Activated T-helper 1 cell treated with anti-CD3 and anti-CD28 coated beads, Interleukin-12 subunit alpha, Interleukin-12 subunit beta, Interleukin-2, Interleukin-4 antibody, amounts not matched to agents 30 ng/mL and 10 ng/mL and 1 ng/mL, durations not matched to agents 14 hours and 24 hours and 36 hours (primary cell): ENCODE measurements at regions of chr2 and their contacts with region 1.

Region 1: DNA sequence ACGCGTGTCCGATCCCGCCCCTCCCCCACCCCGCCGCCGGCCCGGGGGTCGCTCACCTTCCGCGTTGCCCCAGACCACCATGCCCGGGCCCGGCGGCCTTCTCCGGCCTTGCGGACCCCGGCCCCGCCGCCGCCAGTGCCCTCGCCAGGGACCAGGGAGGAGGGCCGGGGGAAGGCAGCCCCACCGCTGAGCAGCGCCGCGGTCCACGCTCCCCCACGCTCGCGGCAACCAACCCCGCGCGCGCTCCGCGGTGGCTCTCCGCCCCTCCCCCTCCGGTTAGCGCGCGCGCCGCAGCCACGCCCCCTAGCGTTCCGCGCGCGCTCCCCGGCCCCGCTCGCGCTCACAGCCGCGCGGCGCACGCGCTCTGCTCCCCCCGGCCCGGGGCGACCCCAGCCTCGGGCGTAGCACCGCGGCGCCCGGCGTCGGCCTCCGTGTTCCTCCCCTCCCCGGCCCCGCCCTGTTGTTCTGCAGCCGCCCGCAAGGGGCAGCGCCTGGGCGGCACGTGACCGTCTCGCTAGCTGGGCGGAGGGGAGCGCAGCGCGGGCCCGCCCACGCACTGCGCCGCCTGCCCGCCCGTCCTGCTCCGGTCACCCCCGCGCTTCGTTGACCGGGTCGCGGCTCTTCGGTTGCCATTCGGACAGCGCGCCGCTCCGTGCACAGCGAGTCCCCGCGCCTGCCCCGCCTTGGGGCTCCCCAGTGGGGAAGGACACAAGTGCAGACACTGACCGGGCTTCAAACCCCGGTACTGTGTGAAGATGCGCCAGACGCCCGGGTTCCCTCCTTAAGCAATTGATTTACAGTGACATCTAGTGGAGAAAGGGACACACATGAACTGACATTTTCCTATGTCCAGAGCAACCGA is at the start of gene REV1:
- DNase-seq: peak; percentile 87
- H3K4me3 Mint-ChIP-seq: peak within 1 kb of the TSS; percentile 94
- H3K27ac Mint-ChIP-seq: peak within 1 kb of the TSS; percentile 97
- H3K4me1 Mint-ChIP-seq: peaks cover 35% of the 10 kb centered on the region
- H3K27me3 Mint-ChIP-seq: peaks cover 3% of the 10 kb centered on the region
- total RNA-seq, gene REV1: 49.6 and 53.7 TPM in 2 replicates

Region 2: GRCh38 chr2:98822301-98823164 is 667.5 kb before region 1 on chr2:
- intact Hi-C with region 1: loop called (anchors 10 kb)
- DNase-seq: peak; percentile 63
- H3K4me3 Mint-ChIP-seq: peak overlapping the region; percentile 69
- H3K27ac Mint-ChIP-seq: no peak overlapping the region
- H3K4me1 Mint-ChIP-seq: peaks cover 27% of the 10 kb centered on the region
- H3K27me3 Mint-ChIP-seq: peaks cover 10% of the 10 kb centered on the region

Region 3: GRCh38 chr2:99154643-99155536 is 335.1 kb before region 1 on chr2 and contains the starts of genes LIPT1 and TSGA10:
- intact Hi-C with region 1: loop called (anchors 1 kb)
- DNase-seq: peak; percentile 92
- H3K4me3 Mint-ChIP-seq: no peak within 1 kb of the TSS
- H3K27ac Mint-ChIP-seq: peak within 1 kb of the TSS; percentile 95
- H3K4me1 Mint-ChIP-seq: peaks cover 31% of the 10 kb centered on the region
- H3K27me3 Mint-ChIP-seq: no peaks in the 10 kb centered on the region
- total RNA-seq, gene LIPT1: 2.2 and 3.3 TPM in 2 replicates
- total RNA-seq, gene TSGA10: 3.0 and 4.1 TPM in 2 replicates

Region 4: DNA sequence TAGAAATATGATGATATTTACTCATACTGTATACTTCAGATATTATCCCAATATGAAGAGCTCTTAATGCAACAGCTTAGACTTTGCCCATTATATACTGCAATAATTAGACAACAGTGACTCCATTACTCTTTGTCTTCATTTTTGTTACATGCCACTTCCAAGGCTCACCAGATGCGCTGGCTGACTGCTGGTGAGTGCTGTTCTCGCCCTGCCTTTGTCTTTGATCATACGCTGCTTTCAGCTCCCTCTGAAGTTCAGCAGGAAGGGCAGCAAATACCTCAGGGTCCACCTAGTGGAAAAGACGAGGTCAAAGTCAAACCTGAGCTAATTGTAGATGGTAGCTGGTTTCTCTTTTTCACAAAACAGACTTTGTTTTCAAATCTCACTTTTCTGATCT is 86.5 kb before region 1 on chr2:
- intact Hi-C with region 1: loop called (anchors 5 kb)
- DNase-seq: no peak
- H3K4me3 Mint-ChIP-seq: no peak overlapping the region
- H3K27ac Mint-ChIP-seq: peak overlapping the region; percentile 35
- H3K4me1 Mint-ChIP-seq: peaks cover 11% of the 10 kb centered on the region
- H3K27me3 Mint-ChIP-seq: no peaks in the 10 kb centered on the region

Region 5: DNA sequence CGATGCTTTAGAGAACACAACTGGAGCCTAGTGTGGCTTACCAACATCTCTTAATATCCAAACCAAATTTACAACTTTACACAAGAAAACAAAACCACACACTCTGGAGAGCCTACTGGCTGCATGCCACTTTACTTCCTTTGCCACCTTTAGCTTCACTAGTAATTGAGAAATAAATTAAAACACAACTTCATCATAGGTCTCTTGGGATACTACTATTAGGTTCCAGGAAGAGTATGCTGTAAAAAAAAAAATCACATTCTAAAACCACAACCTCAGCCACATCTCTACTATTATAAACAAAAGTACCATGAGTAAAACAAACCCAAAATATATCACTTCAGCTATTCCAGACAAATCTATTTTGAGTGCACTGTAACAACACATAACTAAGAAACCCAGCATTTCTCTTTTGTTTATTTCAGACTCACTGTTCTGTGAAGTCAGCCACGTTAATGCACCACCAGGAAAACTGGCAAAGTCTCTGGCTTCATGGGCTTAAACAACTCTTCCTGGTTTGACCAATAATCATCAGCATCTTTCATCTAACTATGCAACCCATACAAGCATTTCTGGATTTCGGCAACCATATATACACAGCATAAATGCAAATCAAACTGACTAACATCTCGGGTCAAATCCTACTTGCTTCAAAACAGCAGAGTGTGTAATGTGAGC is 59.2 kb before region 1 on chr2:
- intact Hi-C with region 1: no loop called
- DNase-seq: no peak
- H3K4me3 Mint-ChIP-seq: no peak overlapping the region
- H3K27ac Mint-ChIP-seq: peak overlapping the region; percentile 7
- H3K4me1 Mint-ChIP-seq: peaks cover 11% of the 10 kb centered on the region
- H3K27me3 Mint-ChIP-seq: no peaks in the 10 kb centered on the region

Region 6: GRCh38 chr2:100580367-100581276 is 1090.6 kb after region 1 on chr2:
- intact Hi-C with region 1: loop called (anchors 10 kb)
- DNase-seq: peak; percentile 37
- H3K4me3 Mint-ChIP-seq: peak overlapping the region; percentile 63
- H3K27ac Mint-ChIP-seq: peak overlapping the region; percentile 85
- H3K4me1 Mint-ChIP-seq: peaks cover 42% of the 10 kb centered on the region
- H3K27me3 Mint-ChIP-seq: peaks cover 2% of the 10 kb centered on the region